ENCODE measurements at regions of chr20 and their contacts with region 1.

Region 1: DNA sequence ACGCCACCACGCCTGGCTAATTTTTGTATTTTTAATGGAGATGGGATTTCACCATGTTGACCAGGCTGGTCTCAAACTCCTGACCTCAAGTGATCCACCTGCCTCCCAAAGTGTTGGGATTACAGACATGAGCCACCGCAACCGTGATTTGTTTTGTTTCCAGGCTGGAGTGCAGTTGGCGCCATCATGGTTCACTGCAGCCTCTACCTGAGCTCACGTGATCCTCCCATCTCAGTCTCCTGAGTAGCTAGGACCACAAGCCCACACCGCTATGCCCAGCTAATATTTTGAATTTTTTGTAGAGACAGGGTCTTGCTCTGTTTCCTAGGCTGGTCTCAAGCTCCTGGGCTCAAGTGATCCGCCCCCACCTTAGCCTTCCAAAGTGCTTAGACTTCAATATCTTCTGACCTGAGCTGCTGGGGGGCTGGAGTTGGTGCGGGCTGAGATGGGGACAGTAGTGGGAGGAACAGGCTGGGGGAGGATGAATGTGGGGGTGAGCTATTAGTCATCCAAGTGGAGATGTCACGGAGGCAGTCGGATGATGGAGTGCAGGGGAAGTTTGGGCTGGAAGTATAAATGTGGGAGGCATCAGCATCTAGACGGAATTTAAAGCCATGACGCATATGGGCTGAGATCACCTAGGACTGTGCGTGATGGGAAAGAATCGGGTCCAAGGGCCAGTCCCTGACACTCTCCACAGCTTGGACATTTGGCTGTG is 23.1 kb upstream of the ZMYND8 start:
- DNase-seq: no peak
- H3K4me3 ChIP-seq: no peak overlapping the region
- H3K4me3 Mint-ChIP-seq: no peak overlapping the region
- H3K27ac ChIP-seq: no peak overlapping the region
- H3K27ac Mint-ChIP-seq: peak overlapping the region in 2 of 8 donors; percentile 13 to 65
- H3K4me1 ChIP-seq: peaks cover 10% of the 10 kb centered on the region
- H3K4me1 Mint-ChIP-seq: peaks cover 5 to 15% (median 5%) of the 10 kb centered on the region in 3 donors
- H3K27me3 ChIP-seq: no peaks in the 10 kb centered on the region
- H3K27me3 Mint-ChIP-seq: peaks cover 0 to 1% of the 10 kb centered on the region in 2 donors

Region 2: DNA sequence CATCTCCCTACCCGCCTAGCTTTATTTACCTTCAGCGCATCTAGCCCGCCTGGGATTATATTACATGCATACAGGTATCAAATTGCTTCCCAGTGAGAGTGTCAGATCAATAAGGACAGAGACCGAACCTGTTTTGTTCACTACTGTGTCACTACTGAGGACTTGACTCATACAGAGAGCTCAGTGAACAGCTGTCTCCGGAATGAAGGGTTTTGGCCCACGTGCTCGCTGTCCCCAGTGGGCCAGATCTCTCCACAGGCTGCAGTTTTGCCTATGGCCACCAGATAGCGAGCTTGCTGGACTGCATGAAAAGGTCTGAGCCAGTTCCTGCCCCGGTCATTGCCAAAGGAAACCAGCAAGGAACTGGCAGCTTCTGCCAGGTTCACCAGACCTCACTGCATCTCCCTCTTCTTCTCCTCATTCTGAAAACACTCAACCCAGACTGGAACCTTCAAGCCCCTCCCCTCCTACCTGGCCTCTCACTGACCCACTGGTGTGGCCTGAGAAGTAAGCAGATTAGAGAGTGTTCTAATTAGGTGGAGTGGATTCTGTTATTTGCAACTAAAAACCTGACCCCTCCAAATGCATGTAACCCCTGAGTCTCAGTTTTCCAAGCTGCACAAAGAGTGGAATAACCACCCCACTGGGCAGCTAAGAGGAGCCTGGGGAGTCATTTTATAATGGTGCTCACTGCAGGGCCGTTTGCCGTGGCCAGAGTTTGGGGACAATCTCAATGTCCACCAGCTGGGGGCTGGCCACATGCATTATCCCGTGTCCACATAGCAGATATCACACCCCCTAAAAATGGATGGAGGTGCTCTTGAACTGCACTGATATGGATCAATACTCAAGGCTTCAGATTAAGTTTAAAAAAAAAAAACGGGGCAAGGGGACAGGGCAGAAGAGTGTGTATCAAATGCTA is 173.8 kb before region 1 on chr20:
- CTCF ChIA-PET with region 1: interaction called, 32 read pairs
- POLR2A ChIA-PET with region 1: no interaction called
- DNase-seq: peak in 1 of 5 donors; percentile 67
- H3K4me3 ChIP-seq: no peak overlapping the region
- H3K4me3 Mint-ChIP-seq: no peak overlapping the region
- H3K27ac ChIP-seq: no peak overlapping the region
- H3K27ac Mint-ChIP-seq: peak overlapping the region in 2 of 8 donors; percentile 16 to 38
- H3K4me1 ChIP-seq: no peaks in the 10 kb centered on the region
- H3K4me1 Mint-ChIP-seq: peaks cover 2 to 7% (median 5%) of the 10 kb centered on the region in 3 donors
- H3K27me3 ChIP-seq: no peaks in the 10 kb centered on the region
- H3K27me3 Mint-ChIP-seq: no peaks in the 10 kb centered on the region

Region 3: GRCh38 chr20:47272893-47273590 is 106.5 kb before region 1 on chr20:
- CTCF ChIA-PET with region 1: interaction called, 361 read pairs
- POLR2A ChIA-PET with region 1: interaction called, 5 read pairs
- DNase-seq: peak in 4 of 5 donors; percentile 21 to 56 (median 46)
- H3K4me3 ChIP-seq: no peak overlapping the region
- H3K4me3 Mint-ChIP-seq: no peak overlapping the region
- H3K27ac ChIP-seq: no peak overlapping the region
- H3K27ac Mint-ChIP-seq: peak overlapping the region in 4 of 8 donors; percentile 2 to 77 (median 34)
- H3K4me1 ChIP-seq: no peaks in the 10 kb centered on the region
- H3K4me1 Mint-ChIP-seq: peaks cover 14 to 29% (median 14%) of the 10 kb centered on the region in 3 donors
- H3K27me3 ChIP-seq: no peaks in the 10 kb centered on the region
- H3K27me3 Mint-ChIP-seq: no peaks in the 10 kb centered on the region

Region 4: DNA sequence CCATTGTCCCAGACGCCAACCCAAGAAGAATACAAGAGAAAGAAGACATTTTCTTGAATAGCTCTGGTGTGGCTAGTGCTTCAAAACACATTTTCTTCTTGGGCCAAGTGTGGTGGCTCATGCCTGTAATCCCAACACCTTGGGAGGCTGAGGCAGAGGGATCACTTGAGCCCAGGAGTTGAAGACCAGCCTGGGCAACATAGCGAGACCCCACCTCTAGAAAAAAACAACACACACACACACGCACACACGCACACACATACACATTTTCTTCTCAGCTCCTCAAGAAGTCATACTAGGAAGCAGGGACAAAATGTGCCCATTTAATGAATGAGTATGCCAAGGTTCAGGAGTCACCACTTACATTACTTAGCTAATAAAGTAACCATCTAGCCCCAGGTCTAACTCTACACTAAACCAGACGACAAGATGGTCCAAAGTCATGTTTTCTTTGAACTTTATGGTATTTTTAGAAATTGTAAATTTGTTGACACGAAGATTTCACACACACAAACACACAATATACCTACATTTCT is 91.9 kb before region 1 on chr20:
- CTCF ChIA-PET with region 1: interaction called, 46 read pairs
- POLR2A ChIA-PET with region 1: no interaction called
- DNase-seq: no peak
- H3K4me3 ChIP-seq: no peak overlapping the region
- H3K4me3 Mint-ChIP-seq: no peak overlapping the region
- H3K27ac ChIP-seq: no peak overlapping the region
- H3K27ac Mint-ChIP-seq: peak overlapping the region in 2 of 8 donors; percentile 47 to 58
- H3K4me1 ChIP-seq: no peaks in the 10 kb centered on the region
- H3K4me1 Mint-ChIP-seq: no peaks in the 10 kb centered on the region
- H3K27me3 ChIP-seq: no peaks in the 10 kb centered on the region
- H3K27me3 Mint-ChIP-seq: no peaks in the 10 kb centered on the region

Region 5: GRCh38 chr20:47356526-47357295 is 22.9 kb before region 1 on chr20 and contains the start of gene ZMYND8:
- CTCF ChIA-PET with region 1: interaction called, 30 read pairs
- POLR2A ChIA-PET with region 1: interaction called, 6 read pairs
- DNase-seq: peak; percentile 78 to 99 (median 95)
- H3K4me3 ChIP-seq: peak within 1 kb of the TSS; percentile 68
- H3K4me3 Mint-ChIP-seq: peak within 1 kb of the TSS in 6 of 7 donors; percentile 85 to 97 (median 94)
- H3K27ac ChIP-seq: peak within 1 kb of the TSS; percentile 89
- H3K27ac Mint-ChIP-seq: peak within 1 kb of the TSS; percentile 93 to 99 (median 98)
- H3K4me1 ChIP-seq: peaks cover 72% of the 10 kb centered on the region
- H3K4me1 Mint-ChIP-seq: peaks cover 5 to 40% (median 22%) of the 10 kb centered on the region in 3 donors
- H3K27me3 ChIP-seq: no peaks in the 10 kb centered on the region
- H3K27me3 Mint-ChIP-seq: peaks cover 0 to 4% of the 10 kb centered on the region in 2 donors
- total RNA-seq, gene ZMYND8: 25.8 to 30.7 TPM

Region 6: DNA sequence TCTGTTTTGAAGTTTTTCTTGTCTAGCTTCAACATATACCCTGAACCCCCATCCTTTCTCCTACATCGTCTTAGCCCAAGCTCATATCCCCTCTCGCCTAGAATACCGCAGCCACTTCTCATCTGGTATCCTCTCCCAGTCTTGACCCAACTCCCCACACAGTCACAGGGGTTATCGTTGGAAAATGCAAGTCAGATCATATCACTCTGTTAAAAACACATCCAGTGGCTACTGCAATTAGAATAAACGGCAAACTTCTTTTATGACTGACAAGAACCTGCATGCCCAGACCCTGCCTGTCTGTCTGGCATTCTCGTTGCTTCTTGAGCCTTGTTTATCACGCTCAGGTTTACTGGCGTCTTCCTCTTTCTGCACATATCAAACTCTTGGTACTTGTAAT is 102.2 kb after region 1 on chr20:
- CTCF ChIA-PET with region 1: no interaction called
- POLR2A ChIA-PET with region 1: no interaction called
- DNase-seq: no peak
- H3K4me3 ChIP-seq: no peak overlapping the region
- H3K4me3 Mint-ChIP-seq: no peak overlapping the region
- H3K27ac ChIP-seq: no peak overlapping the region
- H3K27ac Mint-ChIP-seq: peak overlapping the region in 2 of 8 donors; percentile 3 to 18
- H3K4me1 ChIP-seq: peaks cover 2% of the 10 kb centered on the region
- H3K4me1 Mint-ChIP-seq: peaks cover 1 to 9% (median 2%) of the 10 kb centered on the region in 3 donors
- H3K27me3 ChIP-seq: no peaks in the 10 kb centered on the region
- H3K27me3 Mint-ChIP-seq: no peaks in the 10 kb centered on the region

Region 7: DNA sequence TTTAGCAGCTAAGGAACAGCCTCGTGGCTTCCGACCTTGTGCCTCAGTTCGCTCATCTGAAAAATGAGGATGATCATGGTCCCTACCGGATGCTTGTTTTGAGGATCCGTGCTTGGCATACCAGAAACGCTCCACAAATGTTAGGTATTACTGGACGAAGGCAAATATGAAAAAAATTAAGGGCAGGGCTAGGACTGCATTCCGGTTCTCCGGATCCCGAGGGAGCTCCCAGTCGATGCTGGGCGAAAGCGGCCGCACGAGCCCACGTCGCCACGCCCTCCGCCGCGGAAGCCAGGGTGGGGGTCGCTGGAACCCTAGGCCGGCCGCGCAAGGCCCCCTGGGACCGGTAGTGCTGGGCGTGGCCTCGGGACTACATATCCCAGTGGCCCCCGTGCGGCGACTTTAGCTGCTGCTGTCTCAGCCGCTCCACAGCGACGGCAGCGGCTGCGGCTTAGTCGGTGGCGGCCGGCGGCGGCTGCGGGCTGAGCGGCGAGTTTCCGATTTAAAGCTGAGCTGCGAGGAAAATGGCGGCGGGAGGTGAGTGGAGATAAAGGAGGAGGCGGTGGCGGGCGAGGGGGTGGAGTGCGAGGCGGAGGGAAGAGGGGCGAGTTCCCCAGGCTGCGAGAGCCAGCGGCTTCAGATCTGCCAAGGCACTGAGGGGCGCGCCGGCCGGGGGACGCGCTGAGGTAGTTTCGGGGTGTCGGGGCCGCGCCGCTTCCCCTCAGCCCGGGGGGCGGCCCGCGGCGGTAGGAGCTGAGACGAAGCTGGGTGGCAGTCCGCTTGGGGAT is 122.1 kb after region 1 on chr20 and contains the start of gene NCOA3:
- CTCF ChIA-PET with region 1: interaction called, 12 read pairs
- POLR2A ChIA-PET with region 1: no interaction called
- DNase-seq: peak; percentile 79 to 90 (median 87)
- H3K4me3 ChIP-seq: peak within 1 kb of the TSS; percentile 91
- H3K4me3 Mint-ChIP-seq: peak within 1 kb of the TSS; percentile 88 to 99 (median 98)
- H3K27ac ChIP-seq: peak within 1 kb of the TSS; percentile 80
- H3K27ac Mint-ChIP-seq: peak within 1 kb of the TSS; percentile 84 to 99 (median 94)
- H3K4me1 ChIP-seq: peaks cover 38% of the 10 kb centered on the region
- H3K4me1 Mint-ChIP-seq: peaks cover 37 to 57% (median 54%) of the 10 kb centered on the region in 3 donors
- H3K27me3 ChIP-seq: no peaks in the 10 kb centered on the region
- H3K27me3 Mint-ChIP-seq: no peaks in the 10 kb centered on the region
- total RNA-seq, gene NCOA3: 92.4 to 93.8 TPM

Region 8: GRCh38 chr20:47735412-47736400 is 356.1 kb after region 1 on chr20:
- CTCF ChIA-PET with region 1: no interaction called
- POLR2A ChIA-PET with region 1: no interaction called
- DNase-seq: no peak
- H3K4me3 ChIP-seq: no peak overlapping the region
- H3K4me3 Mint-ChIP-seq: no peak overlapping the region
- H3K27ac ChIP-seq: no peak overlapping the region
- H3K27ac Mint-ChIP-seq: no peak overlapping the region
- H3K4me1 ChIP-seq: no peaks in the 10 kb centered on the region
- H3K4me1 Mint-ChIP-seq: no peaks in the 10 kb centered on the region
- H3K27me3 ChIP-seq: no peaks in the 10 kb centered on the region
- H3K27me3 Mint-ChIP-seq: peaks cover 0 to 5% of the 10 kb centered on the region in 2 donors

Measured in CD8-positive, alpha-beta memory T cell (primary cell).